BJ (cell line): ENCODE measurements at regions of chr1 and their contacts with region 1.

Region 1: DNA sequence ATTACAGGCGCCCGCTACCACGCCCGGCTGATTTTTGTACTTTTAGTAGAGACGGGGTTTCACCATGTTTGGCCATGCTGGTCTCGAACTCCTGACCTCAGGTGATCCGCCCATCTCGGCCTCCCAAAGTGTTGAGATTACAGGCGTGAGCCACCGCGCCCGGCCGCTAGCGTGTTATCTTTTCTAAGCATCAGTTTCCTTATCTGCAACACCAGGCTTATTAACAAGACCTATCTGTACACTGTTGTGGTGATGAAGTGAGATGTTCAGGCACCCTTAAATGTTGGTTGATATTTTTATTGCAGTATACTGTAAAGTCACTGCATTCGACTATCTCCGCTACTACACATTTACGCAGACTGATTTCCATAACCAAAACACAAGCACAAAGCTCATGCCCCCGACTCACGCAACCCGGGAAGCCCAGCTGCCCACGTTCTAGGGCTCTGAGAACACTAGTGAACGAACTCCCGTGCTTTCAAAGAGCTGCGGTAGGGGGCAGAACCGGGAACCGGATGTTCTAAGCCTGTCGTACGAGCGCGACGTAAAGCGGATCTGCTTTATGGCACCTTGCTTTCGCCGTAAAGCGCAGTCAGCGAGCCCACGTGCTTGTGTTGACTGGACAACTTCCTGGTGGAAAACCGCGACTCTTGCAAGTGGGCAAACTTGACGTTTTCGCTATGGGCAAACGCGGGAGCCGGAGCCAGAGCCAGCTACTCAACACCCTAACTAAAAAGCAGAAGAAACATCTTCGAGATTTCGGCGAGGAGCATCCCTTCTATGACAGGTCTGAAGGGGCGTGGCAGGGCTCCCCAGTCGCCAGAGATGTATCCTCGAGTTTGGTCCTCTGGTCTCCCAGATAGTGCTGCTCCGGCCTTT is at the start of gene UTP25:
- DNase-seq: peak; percentile 81
- H3K4me3 ChIP-seq: peak within 1 kb of the TSS; percentile 72
- H3K27me3 ChIP-seq: no peaks in the 10 kb centered on the region
- CTCF ChIP-seq: peak; percentile 83
- polyA plus RNA-seq, gene UTP25: 6.8 and 9.8 TPM in 2 replicates

Region 2: DNA sequence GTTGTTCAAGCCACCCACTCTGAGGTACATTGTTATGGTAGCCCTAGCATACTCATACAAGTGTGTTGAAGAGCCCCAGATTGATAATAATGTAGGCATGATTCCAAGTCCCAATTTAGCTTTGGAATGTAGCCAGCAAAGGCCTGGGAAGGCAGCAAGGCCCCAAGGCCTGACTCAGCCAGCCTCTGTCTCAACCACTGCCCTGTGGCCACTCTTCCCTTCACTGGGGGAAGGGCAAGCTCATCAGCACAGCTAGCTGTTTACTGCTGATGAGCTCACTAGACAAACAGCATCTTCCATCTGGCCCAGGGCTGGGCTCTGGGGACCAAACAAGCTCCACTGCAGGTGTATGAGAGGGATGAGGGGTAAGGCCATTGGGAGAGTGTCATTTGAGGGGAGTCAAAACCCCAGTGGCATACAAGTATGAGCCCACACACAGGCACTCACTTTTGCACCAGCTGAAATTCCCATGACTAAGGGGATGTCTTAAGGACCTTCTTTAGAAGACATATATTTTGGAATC is 19.5 kb before region 1 on chr1:
- CTCF ChIA-PET with region 1: interaction called, 27 read pairs
- POLR2A ChIA-PET with region 1: no interaction called
- DNase-seq: peak; percentile 79
- H3K4me3 ChIP-seq: no peak overlapping the region
- H3K27me3 ChIP-seq: no peaks in the 10 kb centered on the region; the same call in 1 of the 2 replicates
- CTCF ChIP-seq: no peak

Region 3: DNA sequence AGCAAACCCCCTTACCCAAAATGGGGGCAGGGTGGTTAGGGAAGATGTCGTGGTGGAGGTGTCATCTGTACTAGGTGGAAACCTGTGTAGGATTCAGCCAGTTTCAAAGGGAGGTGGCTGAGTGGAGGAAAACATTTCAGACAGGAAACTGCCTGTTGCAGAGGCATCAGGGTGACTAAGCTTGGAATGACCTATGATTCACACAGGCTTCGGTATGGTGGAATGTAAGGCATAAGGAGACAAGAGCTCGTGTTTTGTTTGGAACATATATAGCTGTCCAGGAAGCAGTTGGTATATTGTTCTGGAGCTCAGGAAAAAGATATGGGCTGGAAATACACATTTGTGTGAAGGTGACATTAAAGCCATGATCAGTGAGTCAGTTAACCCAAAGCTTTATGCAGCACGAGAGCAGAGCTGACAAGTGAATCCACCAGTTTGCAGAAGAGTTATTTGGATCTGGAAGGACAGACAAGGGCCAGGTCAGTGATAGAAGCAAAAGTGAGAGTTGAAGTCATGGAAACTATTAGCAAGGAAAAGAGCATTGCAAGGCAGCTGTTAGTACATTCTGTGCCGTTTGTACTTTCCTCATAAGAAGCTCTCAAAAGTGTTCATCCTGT is 12.4 kb after region 1 on chr1:
- CTCF ChIA-PET with region 1: interaction called, 19 read pairs
- POLR2A ChIA-PET with region 1: interaction called, 3 read pairs
- DNase-seq: peak; percentile 70
- H3K4me3 ChIP-seq: no peak overlapping the region
- H3K27me3 ChIP-seq: no peaks in the 10 kb centered on the region
- CTCF ChIP-seq: no peak

Region 4: GRCh38 chr1:209860293-209860881 is 32.8 kb after region 1 on chr1:
- CTCF ChIA-PET with region 1: interaction called, 11 read pairs
- POLR2A ChIA-PET with region 1: no interaction called
- DNase-seq: no peak
- H3K4me3 ChIP-seq: no peak overlapping the region
- H3K27me3 ChIP-seq: peaks cover 3% of the 10 kb centered on the region
- CTCF ChIP-seq: peak; percentile 89

Region 5: GRCh38 chr1:209911746-209912145 is 84.1 kb after region 1 on chr1:
- CTCF ChIA-PET with region 1: no interaction called
- POLR2A ChIA-PET with region 1: no interaction called
- DNase-seq: no peak
- H3K4me3 ChIP-seq: no peak overlapping the region
- H3K27me3 ChIP-seq: no peaks in the 10 kb centered on the region
- CTCF ChIP-seq: no peak